Activated naive CD4-positive, alpha-beta T cell treated with anti-CD3 and anti-CD28 coated beads, Interleukin-2, amount 10 ng/mL, durations not matched to agents 7 days and 5 days (primary cell): ENCODE measurements at regions of chr9 and their contacts with region 1.

Region 1: GRCh38 chr9:107340920-107341632 is 58.0 kb downstream of the RAD23B start:
- DNase-seq: peak; percentile 85
- H3K4me3 Mint-ChIP-seq: no peak overlapping the region
- H3K27ac Mint-ChIP-seq: no peak overlapping the region
- H3K4me1 Mint-ChIP-seq: peaks cover 8% of the 10 kb centered on the region
- H3K27me3 Mint-ChIP-seq: no peaks in the 10 kb centered on the region

Region 2: DNA sequence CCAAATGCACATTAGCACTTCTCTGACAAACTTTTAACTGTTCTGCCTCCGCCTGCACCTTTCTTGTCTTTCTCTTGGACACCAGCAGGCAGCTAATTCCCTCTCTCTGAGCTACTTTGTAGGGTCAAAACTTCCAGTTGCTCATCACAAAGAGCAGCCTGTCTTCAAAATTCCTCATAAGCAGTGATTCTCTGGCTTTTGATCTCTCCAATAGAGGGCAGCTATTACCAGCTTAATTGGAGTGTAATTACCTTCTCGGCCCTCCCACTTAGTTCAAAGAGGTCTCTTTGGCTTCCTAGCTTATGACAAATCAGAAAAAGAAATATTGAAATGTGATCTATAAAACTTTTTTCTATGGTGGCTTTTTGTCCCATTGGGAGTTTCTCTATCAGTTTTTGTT is 101.6 kb before region 1 on chr9:
- CTCF ChIA-PET with region 1: interaction called, 21 read pairs
- DNase-seq: no peak
- H3K4me3 Mint-ChIP-seq: no peak overlapping the region
- H3K27ac Mint-ChIP-seq: no peak overlapping the region
- H3K4me1 Mint-ChIP-seq: peaks cover 6% of the 10 kb centered on the region
- H3K27me3 Mint-ChIP-seq: peaks cover 10% of the 10 kb centered on the region

Region 3: GRCh38 chr9:107282753-107283625 is 58.1 kb before region 1 on chr9 and contains the start of gene RAD23B:
- CTCF ChIA-PET with region 1: interaction called, 19 read pairs
- DNase-seq: peak; percentile 97
- H3K4me3 Mint-ChIP-seq: peak within 1 kb of the TSS; percentile 91
- H3K27ac Mint-ChIP-seq: peak within 1 kb of the TSS; percentile 94
- H3K4me1 Mint-ChIP-seq: peaks cover 41% of the 10 kb centered on the region
- H3K27me3 Mint-ChIP-seq: peaks cover 8% of the 10 kb centered on the region

Region 4: GRCh38 chr9:107389617-107390071 is 48.6 kb after region 1 on chr9:
- CTCF ChIA-PET with region 1: no interaction called
- DNase-seq: no peak
- H3K4me3 Mint-ChIP-seq: no peak overlapping the region
- H3K27ac Mint-ChIP-seq: no peak overlapping the region
- H3K4me1 Mint-ChIP-seq: no peaks in the 10 kb centered on the region
- H3K27me3 Mint-ChIP-seq: peaks cover 6% of the 10 kb centered on the region